Activated CD4-positive, alpha-beta T cell treated with anti-CD3 and anti-CD28 coated beads, Interleukin-2, amount 10 ng/mL, durations not matched to agents 7 days and 5 days (primary cell): ENCODE measurements at regions of chr2 and their contacts with region 1.

Region 1: DNA sequence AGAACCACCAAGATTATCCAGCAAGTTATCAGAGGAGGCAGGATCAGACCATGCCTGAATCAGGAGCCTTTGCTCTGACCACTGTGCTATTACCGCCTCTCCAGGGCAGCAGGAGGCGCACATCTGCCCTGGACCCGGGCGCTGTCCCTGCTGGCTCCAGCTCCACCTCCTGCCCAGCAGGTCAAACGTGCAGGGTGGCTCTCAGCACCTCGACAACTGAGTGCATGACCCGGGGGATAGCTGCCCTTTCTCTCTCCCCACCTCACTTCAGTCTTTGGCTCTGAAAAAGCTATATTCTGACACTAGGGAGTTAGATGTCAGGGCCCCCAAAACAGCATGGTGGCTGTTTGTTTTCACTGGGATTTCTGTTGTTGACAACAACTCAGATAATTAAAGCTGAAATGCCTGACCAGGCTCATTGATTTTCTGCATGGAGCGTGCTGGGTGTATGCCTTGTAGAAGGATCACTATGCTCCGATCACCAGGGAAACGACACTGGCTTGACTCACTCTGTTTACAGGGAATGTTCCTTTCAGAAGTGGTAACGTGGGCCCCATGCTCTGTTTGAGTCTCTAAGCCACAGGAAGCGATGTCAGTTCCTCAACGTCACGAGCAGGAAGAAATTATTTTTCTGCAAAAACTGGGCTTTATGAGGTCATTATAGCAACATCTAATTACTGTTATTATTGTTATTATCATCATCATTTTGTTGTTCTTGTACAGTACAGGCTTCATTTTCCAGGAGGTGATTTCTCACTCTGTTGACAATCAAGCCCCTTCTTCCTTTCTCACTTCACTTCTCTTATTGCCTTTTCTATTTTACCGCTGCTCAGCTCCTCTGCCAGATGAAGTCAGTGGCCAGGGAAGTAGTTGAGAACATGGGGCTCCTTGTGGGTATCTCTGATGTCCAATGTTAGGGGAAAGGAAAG is 125.6 kb downstream of the PLB1 start:
- DNase-seq: peak; percentile 89
- H3K4me3 Mint-ChIP-seq: peak overlapping the region; percentile 60
- H3K27ac Mint-ChIP-seq: peak overlapping the region; percentile 94
- H3K4me1 Mint-ChIP-seq: peaks cover 89% of the 10 kb centered on the region
- H3K27me3 Mint-ChIP-seq: no peaks in the 10 kb centered on the region

Region 2: GRCh38 chr2:28610583-28611201 is 10.7 kb before region 1 on chr2:
- CTCF ChIA-PET with region 1: interaction called, 55 read pairs
- POLR2A ChIA-PET with region 1: no interaction called
- DNase-seq: no peak
- H3K4me3 Mint-ChIP-seq: no peak overlapping the region
- H3K27ac Mint-ChIP-seq: no peak overlapping the region
- H3K4me1 Mint-ChIP-seq: peaks cover 38% of the 10 kb centered on the region
- H3K27me3 Mint-ChIP-seq: no peaks in the 10 kb centered on the region

Region 3: GRCh38 chr2:29336391-29337241 is 715.2 kb after region 1 on chr2:
- CTCF ChIA-PET with region 1: no interaction called
- POLR2A ChIA-PET with region 1: no interaction called
- DNase-seq: no peak
- H3K4me3 Mint-ChIP-seq: no peak overlapping the region
- H3K27ac Mint-ChIP-seq: no peak overlapping the region
- H3K4me1 Mint-ChIP-seq: no peaks in the 10 kb centered on the region
- H3K27me3 Mint-ChIP-seq: peaks cover 3% of the 10 kb centered on the region